HCT116 (cell line): ENCODE measurements at regions of chr12 and their contacts with region 1.

Region 1: DNA sequence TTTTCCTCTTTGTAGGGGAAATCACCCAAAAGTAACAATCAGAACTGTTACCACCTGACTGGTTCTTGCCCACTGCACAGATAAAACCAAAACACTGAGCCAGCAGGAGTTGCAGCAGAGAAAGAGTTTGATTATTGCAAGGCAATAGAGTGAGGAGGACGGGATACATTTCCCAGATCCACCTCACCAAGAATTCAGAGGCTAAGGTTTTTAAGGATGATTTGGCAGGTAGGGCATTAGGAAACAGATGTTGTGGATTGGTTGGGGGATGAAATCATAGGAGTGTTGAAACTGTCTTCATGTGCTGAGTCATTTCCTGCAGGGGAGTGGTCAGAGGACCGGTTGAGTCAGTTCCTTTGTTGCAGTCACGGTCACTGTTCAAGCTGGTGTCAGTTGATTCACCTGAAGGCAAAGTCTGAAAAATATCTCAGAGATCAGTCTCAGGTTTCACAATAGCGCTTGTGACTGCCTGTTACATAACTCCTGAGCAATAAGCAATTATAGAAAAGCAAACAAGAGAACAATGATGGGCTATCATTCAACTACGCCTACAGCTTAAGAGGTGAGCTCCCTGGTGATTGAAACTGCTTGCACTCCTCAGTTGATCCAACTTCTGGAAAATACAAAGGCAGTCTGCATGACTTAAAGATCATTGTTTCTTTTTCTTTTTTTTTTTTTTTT is 20.3 kb upstream of the AMN1 start:
- DNase-seq: peak; percentile 99
- ATAC-seq: peak; percentile 87
- H3K4me3 ChIP-seq: peak overlapping the region; percentile 10 to 47; a peak in 3 of 4 replicates
- H3K27ac ChIP-seq: peak overlapping the region; percentile 92
- H3K4me1 ChIP-seq: peaks cover 79 to 83% of the 10 kb centered on the region in 2 experiments
- H3K27me3 ChIP-seq: no peaks in the 10 kb centered on the region
- CTCF ChIP-seq: no peak
- POLR2A ChIP-seq: no peak
- RAD21 ChIP-seq: peak; percentile 58

Region 2: DNA sequence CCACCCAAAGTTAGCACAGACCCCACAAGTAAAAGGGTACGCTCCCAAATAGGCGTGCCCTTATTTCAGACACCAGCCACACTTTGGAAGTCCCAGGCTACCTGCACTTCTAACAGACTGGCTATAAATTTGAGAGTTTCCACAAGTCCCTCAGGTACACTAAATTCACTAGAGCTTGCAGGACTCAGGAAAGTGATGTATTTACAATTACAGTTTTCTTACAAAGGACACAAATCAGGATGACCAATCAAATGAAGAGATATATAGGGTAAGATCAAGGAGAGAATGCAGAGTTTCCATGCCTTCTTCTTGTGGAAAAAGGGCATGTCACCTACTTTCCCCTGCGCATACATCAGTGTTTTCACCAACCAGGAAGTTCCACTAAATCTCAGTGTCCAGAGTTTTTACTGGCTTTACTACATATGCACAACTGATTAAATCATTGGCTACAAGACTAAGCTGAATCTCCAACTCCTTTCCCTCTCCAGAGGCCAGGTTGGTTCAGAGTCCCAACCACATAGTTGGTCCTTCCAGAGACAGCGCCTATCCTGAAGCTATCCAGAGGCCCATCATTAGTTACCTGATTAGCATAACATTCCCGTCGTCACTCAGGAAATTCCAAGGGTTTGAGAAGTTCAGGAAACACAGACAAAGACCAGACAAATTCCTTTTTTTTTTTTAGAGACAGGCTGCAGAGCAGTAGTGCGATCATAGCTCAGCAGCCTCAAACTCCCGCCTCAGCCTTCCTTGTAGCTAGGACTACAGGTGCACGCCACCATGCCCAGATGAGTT is 242.5 kb before region 1 on chr12:
- CTCF ChIA-PET with region 1: no interaction called
- POLR2A ChIA-PET with region 1: no interaction called
- RAD21 ChIA-PET with region 1: no interaction called
- intact Hi-C with region 1: no loop called
- DNase-seq: no peak
- ATAC-seq: no peak
- H3K4me3 ChIP-seq: no peak overlapping the region
- H3K27ac ChIP-seq: no peak overlapping the region
- H3K4me1 ChIP-seq: peaks cover 16 to 26% of the 10 kb centered on the region in 2 experiments
- H3K27me3 ChIP-seq: no peaks in the 10 kb centered on the region
- CTCF ChIP-seq: no peak
- POLR2A ChIP-seq: no peak
- RAD21 ChIP-seq: no peak

Region 3: GRCh38 chr12:31672521-31672920 is 76.6 kb before region 1 on chr12:
- CTCF ChIA-PET with region 1: no interaction called
- POLR2A ChIA-PET with region 1: no interaction called
- RAD21 ChIA-PET with region 1: no interaction called
- intact Hi-C with region 1: no loop called
- DNase-seq: no peak
- ATAC-seq: no peak
- H3K4me3 ChIP-seq: no peak overlapping the region
- H3K27ac ChIP-seq: no peak overlapping the region
- H3K4me1 ChIP-seq: peaks cover 0 to 21% of the 10 kb centered on the region in 2 experiments; a peak in 3 of 4 replicates
- H3K27me3 ChIP-seq: no peaks in the 10 kb centered on the region
- CTCF ChIP-seq: no peak
- POLR2A ChIP-seq: no peak
- RAD21 ChIP-seq: no peak

Region 4: GRCh38 chr12:31687101-31687527 is 62.0 kb before region 1 on chr12:
- CTCF ChIA-PET with region 1: no interaction called
- POLR2A ChIA-PET with region 1: no interaction called
- RAD21 ChIA-PET with region 1: no interaction called
- intact Hi-C with region 1: no loop called
- DNase-seq: no peak
- ATAC-seq: no peak
- H3K4me3 ChIP-seq: no peak overlapping the region
- H3K27ac ChIP-seq: no peak overlapping the region
- H3K4me1 ChIP-seq: peaks cover 2 to 7% of the 10 kb centered on the region in 2 experiments; a peak in 3 of 4 replicates
- H3K27me3 ChIP-seq: no peaks in the 10 kb centered on the region
- CTCF ChIP-seq: no peak
- POLR2A ChIP-seq: no peak
- RAD21 ChIP-seq: no peak

Region 5: GRCh38 chr12:31959161-31959700 is 210.1 kb after region 1 on chr12 and contains the start of gene RESF1:
- CTCF ChIA-PET with region 1: no interaction called
- POLR2A ChIA-PET with region 1: interaction called, 6 read pairs
- RAD21 ChIA-PET with region 1: no interaction called
- intact Hi-C with region 1: loop called (anchors 5 kb)
- DNase-seq: peak; percentile 83
- ATAC-seq: peak; percentile 96
- H3K4me3 ChIP-seq: peak within 1 kb of the TSS; percentile 68 to 87
- H3K27ac ChIP-seq: peak within 1 kb of the TSS; percentile 86
- H3K4me1 ChIP-seq: peaks cover 24 to 41% of the 10 kb centered on the region in 2 experiments
- H3K27me3 ChIP-seq: no peaks in the 10 kb centered on the region
- CTCF ChIP-seq: no peak
- POLR2A ChIP-seq: peak; percentile 45
- RAD21 ChIP-seq: peak; percentile 27
- total RNA-seq, gene RESF1: 64.7 TPM